A549 (cell line): ENCODE measurements at regions of chr19 and their contacts with region 1.

Region 1: DNA sequence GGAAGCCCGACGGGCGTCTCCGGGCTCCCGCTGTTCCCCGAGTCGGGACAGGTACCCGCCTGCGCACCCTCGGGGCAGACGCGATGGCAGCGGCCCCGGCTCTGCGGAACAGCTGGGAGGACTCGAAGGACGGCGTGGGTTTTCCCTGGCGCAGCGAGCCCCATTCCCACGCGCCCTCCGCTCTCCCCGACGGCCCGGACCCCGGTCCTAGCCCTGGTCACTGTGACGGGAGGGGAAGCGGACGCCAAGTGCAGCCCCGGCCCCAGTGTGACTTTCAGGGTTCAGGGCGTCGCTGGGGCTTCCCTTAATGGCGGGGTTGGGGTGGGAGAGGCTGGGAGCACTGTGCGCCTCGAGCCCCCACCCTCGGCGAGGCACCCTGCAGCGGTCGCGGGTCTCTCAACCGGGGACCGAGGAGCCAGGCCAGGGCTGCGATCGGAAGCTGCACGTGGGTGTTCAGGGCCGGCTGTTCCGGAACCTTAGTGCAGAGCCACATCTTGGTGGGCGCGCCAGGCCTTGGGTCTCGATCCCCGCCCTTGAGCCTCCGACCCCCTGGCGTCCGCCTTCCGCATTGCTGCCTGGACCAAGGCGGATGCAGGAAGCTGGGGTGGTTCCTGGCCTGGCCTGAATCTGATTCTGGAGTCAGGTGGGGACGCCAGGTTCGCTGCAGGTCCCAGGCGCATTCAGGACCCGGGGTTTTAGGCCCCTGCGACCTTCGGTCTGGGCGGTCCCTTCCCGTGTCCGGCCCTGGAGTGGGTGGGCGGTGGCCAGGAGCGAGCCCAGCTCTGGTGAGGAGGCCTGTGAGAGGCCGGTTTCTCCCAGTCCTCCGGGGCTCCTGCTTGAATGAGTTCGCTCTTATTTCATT is 3.5 kb downstream of the LGALS7B start:
- DNase-seq: no peak
- ATAC-seq: peak in 1 of 2 experiments; percentile 13; a peak in 2 of 6 replicates
- H3K4me3 ChIP-seq: no peak overlapping the region
- H3K27ac ChIP-seq: peak overlapping the region in 1 of 2 experiments; percentile 54; a peak in 3 of 6 replicates
- H3K4me1 ChIP-seq: peaks cover 11% of the 10 kb centered on the region
- CTCF ChIP-seq: no peak
- EP300 ChIP-seq: no peak
- POLR2A ChIP-seq: no peak
- RAD21 ChIP-seq: no peak

Region 2: GRCh38 chr19:38808741-38809140 is 16.3 kb after region 1 on chr19:
- CTCF ChIA-PET with region 1: interaction called, 10 read pairs
- POLR2A ChIA-PET with region 1: no interaction called
- DNase-seq: no peak
- ATAC-seq: no peak
- H3K4me3 ChIP-seq: no peak overlapping the region
- H3K27ac ChIP-seq: peak overlapping the region in 1 of 2 experiments; percentile 73; a peak in 3 of 6 replicates
- H3K4me1 ChIP-seq: peaks cover 28% of the 10 kb centered on the region
- CTCF ChIP-seq: no peak
- EP300 ChIP-seq: no peak
- POLR2A ChIP-seq: no peak
- RAD21 ChIP-seq: no peak